HepG2 (cell line): ENCODE measurements at regions of chr2 and their contacts with region 1.

Region 1: DNA sequence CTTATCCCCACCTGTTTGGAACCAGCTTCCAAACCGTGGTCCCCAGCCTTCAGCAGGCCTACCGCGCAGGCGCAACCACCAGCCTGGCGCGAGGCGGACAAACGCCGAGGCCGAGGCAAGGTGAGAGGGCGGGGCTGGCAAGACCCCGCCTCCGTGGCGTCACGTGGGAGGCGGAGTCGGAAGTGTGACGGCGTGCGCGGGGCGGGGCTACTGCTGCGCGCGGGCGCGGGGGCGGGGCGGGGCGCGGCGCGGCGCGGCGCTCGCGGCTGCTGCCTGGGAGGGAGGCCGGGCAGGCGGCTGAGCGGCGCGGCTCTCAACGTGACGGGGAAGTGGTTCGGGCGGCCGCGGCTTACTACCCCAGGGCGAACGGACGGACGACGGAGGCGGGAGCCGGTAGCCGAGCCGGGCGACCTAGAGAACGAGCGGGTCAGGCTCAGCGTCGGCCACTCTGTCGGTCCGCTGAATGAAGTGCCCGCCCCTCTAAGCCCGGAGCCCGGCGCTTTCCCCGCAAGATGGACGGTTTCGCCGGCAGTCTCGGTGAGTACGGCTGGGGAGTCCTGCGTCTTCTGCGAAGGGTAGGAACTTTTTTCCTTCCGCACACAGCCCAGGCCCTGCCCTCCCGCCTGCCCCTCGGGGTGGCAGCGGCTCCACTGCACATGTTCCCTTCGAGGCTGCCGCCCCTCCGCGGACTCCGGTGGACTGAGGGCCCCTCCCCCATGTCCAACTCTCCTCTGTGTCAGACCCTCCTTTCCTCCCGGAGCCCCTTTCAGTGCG is at the start of gene EML4:
- DNase-seq: peak; percentile 82
- ATAC-seq: peak; percentile 90
- H3K4me3 ChIP-seq: peak within 1 kb of the TSS; percentile 95 to 98 (median 95)
- H3K27ac ChIP-seq: peak within 1 kb of the TSS; percentile 78
- H3K4me1 ChIP-seq: peaks cover 35% of the 10 kb centered on the region
- H3K27me3 ChIP-seq: no peaks in the 10 kb centered on the region; a peak in 1 of 5 replicates
- CTCF ChIP-seq: peak; percentile 10; the same call in 1 of the 2 replicates
- EP300 ChIP-seq: no peak
- POLR2A ChIP-seq: peak; percentile 75 to 88
- RAD21 ChIP-seq: peak; percentile 72
- total RNA-seq, gene EML4: 243 and 362 TPM in 2 replicates

Region 2: DNA sequence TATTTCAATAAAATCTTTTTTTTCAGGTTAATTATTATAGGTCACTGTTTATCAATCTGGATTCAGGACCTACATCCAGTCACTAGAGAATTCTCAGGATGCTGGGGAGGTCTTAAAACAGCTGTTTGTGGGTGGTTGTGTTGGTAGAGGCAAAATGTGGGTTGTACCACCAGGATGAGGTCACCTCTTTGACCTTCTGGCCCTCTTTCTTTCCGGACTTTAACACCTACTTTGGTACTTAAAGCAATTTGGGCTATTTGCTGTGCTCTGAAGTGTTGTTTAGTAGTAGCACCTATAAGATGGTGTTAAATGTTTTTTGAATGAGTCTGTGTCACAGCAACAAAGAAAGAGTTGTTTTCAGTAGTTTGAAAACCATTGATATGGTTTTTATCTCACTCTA is 14.5 kb after region 1 on chr2:
- CTCF ChIA-PET with region 1: no interaction called
- POLR2A ChIA-PET with region 1: interaction called, 18 read pairs
- in situ Hi-C with region 1: no loop called
- intact Hi-C with region 1: loop called (anchors 2 kb)
- DNase-seq: no peak
- ATAC-seq: no peak
- H3K4me3 ChIP-seq: peak overlapping the region in 2 of 3 experiments; percentile 6 to 22; a peak in 1 of 6 replicates
- H3K27ac ChIP-seq: peak overlapping the region; percentile 6
- H3K4me1 ChIP-seq: peaks cover 100% of the 10 kb centered on the region
- H3K27me3 ChIP-seq: no peaks in the 10 kb centered on the region
- CTCF ChIP-seq: no peak
- EP300 ChIP-seq: no peak
- POLR2A ChIP-seq: no peak
- RAD21 ChIP-seq: no peak

Region 3: DNA sequence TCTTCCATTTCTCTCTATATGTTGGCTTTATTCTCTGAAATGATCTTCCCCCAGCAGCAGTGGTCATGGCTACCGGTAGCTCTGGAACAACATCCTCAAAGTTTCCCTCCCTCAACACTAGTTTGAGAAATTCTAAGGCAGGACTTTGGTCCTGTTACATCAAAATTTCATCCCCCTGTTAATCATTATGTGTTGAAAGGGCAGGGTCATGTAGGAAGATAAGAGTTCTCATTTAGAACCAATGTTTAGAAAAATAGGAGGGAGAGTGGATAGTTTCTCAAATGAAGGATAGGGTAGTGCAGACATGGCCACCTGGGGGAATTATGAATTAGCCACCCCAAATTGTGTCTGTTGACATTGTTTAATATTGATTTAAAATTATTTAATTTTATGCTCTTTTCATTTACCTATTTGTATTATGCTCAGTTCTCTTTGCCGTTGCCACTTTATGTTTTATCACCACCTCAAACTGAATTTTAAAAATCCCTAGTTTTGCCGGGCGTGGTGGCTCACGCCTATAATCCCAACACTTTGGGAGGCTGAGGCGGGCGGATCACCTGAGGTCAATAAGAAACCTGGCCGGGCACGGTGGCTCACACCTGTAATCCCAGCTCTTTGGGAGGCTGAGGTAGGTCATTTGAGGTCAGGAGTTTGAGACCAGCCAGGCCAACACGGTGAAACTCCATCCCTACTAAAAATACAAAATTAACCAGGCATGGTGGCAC is 22.2 kb after region 1 on chr2:
- CTCF ChIA-PET with region 1: no interaction called
- POLR2A ChIA-PET with region 1: interaction called, 12 read pairs
- in situ Hi-C with region 1: no loop called
- intact Hi-C with region 1: loop called (anchors 2 kb)
- DNase-seq: peak; percentile 99
- ATAC-seq: peak; percentile 87
- H3K4me3 ChIP-seq: peak overlapping the region in 2 of 3 experiments; percentile 25 to 43; a peak in 2 of 6 replicates
- H3K27ac ChIP-seq: peak overlapping the region; percentile 98
- H3K4me1 ChIP-seq: peaks cover 100% of the 10 kb centered on the region
- H3K27me3 ChIP-seq: no peaks in the 10 kb centered on the region
- CTCF ChIP-seq: no peak
- EP300 ChIP-seq: peak; percentile 80 to 99; a peak in 3 of 4 replicates
- POLR2A ChIP-seq: peak; percentile 59 to 66
- RAD21 ChIP-seq: peak; percentile 26; the same call in 1 of the 2 replicates

Region 4: GRCh38 chr2:42238644-42239288 is 69.5 kb after region 1 on chr2:
- CTCF ChIA-PET with region 1: no interaction called
- POLR2A ChIA-PET with region 1: no interaction called
- in situ Hi-C with region 1: no loop called
- intact Hi-C with region 1: loop called (anchors 5 kb)
- DNase-seq: peak; percentile 53
- ATAC-seq: peak; percentile 77
- H3K4me3 ChIP-seq: no peak overlapping the region
- H3K27ac ChIP-seq: no peak overlapping the region
- H3K4me1 ChIP-seq: peaks cover 100% of the 10 kb centered on the region
- H3K27me3 ChIP-seq: no peaks in the 10 kb centered on the region
- CTCF ChIP-seq: peak; percentile 76
- EP300 ChIP-seq: no peak
- POLR2A ChIP-seq: peak; percentile 25 to 33; a peak in 1 of 4 replicates
- RAD21 ChIP-seq: peak; percentile 70